ENCODE measurements at regions of chr19 and their contacts with region 1.

Region 1: GRCh38 chr19:39328046-39328705 is 7.5 kb upstream of the LRFN1 start:
- DNase-seq: peak; percentile 82 to 85
- ATAC-seq: peak; percentile 61 to 88 (median 80)
- H3K4me3 ChIP-seq: no peak overlapping the region
- H3K27ac ChIP-seq: no peak overlapping the region
- H3K4me1 ChIP-seq: peaks cover 0 to 16% (median 5%) of the 10 kb centered on the region in 9 donors
- H3K27me3 ChIP-seq: peaks cover 0 to 5% (median 0%) of the 10 kb centered on the region in 7 donors
- CTCF ChIP-seq: peak; percentile 83 to 98 (median 95)

Region 2: DNA sequence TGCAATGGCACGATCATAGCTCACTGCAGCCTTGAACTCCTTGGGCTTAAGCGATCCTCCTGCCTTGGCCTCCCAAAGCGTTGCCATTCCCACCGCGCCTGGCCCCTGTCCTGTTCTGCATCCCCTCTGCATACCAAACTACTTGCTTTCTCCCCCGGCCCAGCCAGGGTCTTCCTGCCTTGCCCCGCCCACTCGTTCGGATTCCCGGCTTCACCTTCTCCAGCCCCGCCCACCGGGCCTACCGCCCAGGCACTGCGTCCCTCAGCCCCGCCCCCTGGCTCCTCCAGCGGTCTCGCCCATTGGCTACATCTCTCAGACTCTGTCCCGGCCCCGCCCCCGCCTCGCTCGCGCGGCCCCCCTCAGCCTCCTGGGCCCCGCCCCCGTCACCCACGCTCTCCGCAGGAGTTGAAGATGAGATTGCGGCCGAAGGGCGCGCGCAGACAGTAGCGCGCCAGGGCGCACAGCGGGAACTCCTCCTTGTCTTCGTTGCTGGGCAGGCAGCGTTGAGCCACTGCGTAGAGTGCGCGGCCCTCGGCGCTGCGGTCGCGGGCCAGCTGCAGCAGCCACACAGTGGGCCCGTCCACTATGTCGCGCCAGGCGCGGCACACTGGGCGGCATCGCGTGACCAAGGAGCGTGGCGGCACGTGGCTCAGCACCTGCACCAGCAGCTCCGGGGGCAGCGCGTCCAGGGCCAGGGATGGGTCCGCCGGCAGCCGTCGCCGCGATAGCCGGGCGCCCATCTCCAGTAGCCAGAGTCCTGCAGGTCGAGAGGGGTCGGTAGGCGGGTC is 378.4 kb before region 1 on chr19:
- intact Hi-C with region 1: loop called in 1 of 10 experiments (anchors 10 kb)
- DNase-seq: peak; percentile 87 to 88
- ATAC-seq: peak; percentile 89 to 97 (median 95)
- H3K4me3 ChIP-seq: peak overlapping the region in 9 of 10 donors; percentile 16 to 51 (median 46)
- H3K27ac ChIP-seq: no peak overlapping the region
- H3K4me1 ChIP-seq: peaks cover 0 to 12% (median 8%) of the 10 kb centered on the region in 9 donors
- H3K27me3 ChIP-seq: peaks cover 0 to 22% (median 4%) of the 10 kb centered on the region in 7 donors
- CTCF ChIP-seq: no peak

Region 3: DNA sequence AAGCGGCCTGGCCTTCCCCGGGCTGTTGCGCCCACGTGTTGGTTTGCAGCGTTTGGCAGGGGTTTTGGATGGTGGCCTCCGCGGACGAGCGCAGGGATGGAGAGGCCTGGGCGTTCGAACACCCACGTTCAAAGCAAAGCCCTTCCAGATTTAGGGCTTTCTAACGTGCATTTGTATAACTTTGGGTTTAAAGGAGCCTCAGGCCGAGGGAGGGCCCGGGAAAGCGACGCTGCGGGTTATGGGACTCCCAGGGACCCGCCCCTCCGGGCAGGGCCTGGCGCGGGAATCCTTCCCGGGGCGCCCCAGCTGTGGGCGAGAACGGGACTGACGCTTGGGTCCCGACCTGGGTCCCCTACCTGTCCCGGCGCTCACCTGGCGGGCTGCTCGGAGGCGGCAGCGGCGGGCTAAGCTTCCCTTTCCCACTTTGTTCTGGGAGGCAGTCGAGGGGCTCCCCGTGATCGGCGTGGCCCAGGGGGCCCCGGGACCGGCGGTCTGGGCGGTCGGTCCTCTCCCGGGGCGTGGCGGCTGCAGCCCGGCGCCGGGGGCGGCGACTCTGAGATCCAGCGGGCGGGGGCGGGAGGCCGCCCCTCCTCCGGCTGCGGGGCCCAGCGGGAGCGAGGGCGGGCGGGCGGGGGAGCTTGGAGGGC is 352.8 kb before region 1 on chr19 and contains the start of gene FBXO17:
- intact Hi-C with region 1: loop called in 2 of 10 experiments (anchors 10 kb)
- DNase-seq: peak; percentile 26 to 61
- ATAC-seq: peak; percentile 64 to 89 (median 82)
- H3K4me3 ChIP-seq: peak within 1 kb of the TSS; percentile 38 to 73 (median 60)
- H3K27ac ChIP-seq: peak within 1 kb of the TSS; percentile 4 to 87 (median 78)
- H3K4me1 ChIP-seq: peaks cover 0 to 17% (median 5%) of the 10 kb centered on the region in 9 donors
- H3K27me3 ChIP-seq: peaks cover 0 to 29% (median 20%) of the 10 kb centered on the region in 7 donors
- CTCF ChIP-seq: no peak
- total RNA-seq, gene FBXO17: 1.00 to 2.8 (median 1.7) TPM

Region 4: GRCh38 chr19:39115546-39116080 is 212.6 kb before region 1 on chr19:
- intact Hi-C with region 1: loop called in 4 of 10 experiments (anchors 2 to 5 kb)
- DNase-seq: no peak
- ATAC-seq: no peak
- H3K4me3 ChIP-seq: no peak overlapping the region
- H3K27ac ChIP-seq: no peak overlapping the region
- H3K4me1 ChIP-seq: no peaks in the 10 kb centered on the region
- H3K27me3 ChIP-seq: peaks cover 0 to 66% (median 42%) of the 10 kb centered on the region in 7 donors
- CTCF ChIP-seq: no peak

Region 5: DNA sequence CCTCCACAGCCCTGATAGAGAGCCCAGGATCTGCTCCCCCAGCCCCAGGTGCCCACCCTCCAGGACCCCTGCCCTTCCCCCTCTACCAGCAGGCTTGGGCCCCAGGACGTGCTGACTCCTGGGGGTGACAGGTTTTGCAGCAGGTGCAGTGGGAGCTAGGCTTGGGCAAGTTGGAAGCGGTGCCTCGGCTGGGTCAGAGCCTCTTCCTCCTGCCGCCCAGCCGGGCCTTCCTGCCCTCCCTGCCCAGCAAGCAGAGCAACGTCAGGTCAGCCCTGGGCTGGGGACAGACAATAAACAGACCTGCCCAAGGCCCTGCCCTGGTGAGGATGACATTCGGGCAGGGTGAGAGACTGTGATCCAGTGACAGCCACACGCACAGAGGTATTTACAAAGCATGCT is 140.6 kb before region 1 on chr19:
- intact Hi-C with region 1: loop called in 3 of 10 experiments (anchors 10 kb)
- DNase-seq: no peak
- ATAC-seq: peak in 6 of 8 donors; percentile 20 to 65 (median 50)
- H3K4me3 ChIP-seq: no peak overlapping the region
- H3K27ac ChIP-seq: no peak overlapping the region
- H3K4me1 ChIP-seq: no peaks in the 10 kb centered on the region
- H3K27me3 ChIP-seq: peaks cover 0 to 47% (median 22%) of the 10 kb centered on the region in 7 donors
- CTCF ChIP-seq: peak in 2 of 9 donors; percentile 14 to 18

Region 6: GRCh38 chr19:39212375-39212742 is 115.8 kb before region 1 on chr19:
- intact Hi-C with region 1: loop called in 1 of 10 experiments (anchors 10 kb)
- DNase-seq: no peak
- ATAC-seq: peak in 1 of 8 donors; percentile 39
- H3K4me3 ChIP-seq: no peak overlapping the region
- H3K27ac ChIP-seq: no peak overlapping the region
- H3K4me1 ChIP-seq: no peaks in the 10 kb centered on the region
- H3K27me3 ChIP-seq: peaks cover 0 to 80% (median 38%) of the 10 kb centered on the region in 7 donors
- CTCF ChIP-seq: peak in 2 of 9 donors; percentile 9 to 42

Region 7: DNA sequence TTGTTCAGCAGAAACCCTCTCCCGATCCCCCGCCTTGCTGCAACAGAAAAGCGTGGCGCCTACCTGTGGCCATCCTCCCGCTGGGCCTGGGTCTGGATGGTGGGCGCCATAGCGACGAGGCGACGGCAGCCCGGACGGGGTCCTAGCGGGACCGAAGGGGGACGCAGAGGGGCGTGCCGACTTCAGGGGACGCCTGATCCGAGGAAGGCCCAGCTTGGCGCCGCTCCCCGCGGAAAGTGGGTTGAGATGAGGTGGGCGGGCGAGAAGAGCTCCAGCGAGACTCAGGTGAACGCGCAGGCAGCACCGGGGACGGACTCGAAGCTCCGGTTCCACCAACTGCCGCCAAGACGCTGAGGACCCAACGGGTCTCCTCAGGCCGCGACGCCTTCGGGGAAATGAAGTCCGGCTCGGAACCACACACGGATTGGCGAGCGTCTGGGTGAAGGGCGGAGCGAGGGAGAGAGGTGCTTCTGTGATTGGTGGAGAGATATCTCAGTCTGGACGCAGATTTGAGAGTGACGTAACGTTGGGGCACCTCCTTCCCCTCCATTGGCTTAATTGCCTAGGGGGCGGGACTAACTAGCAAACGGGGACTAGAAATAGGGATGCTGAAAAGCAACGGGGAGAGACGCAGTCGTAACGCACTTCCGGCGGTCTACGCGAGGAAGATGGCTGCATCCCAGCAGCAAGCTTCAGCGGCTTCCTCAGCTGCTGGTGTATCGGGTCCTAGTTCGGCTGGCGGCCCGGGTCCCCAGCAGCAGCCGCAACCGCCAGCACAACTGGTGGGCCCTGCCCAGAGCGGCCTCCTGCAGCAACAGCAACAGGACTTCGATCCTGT is 62.8 kb after region 1 on chr19 and contains the starts of genes MED29 and PAF1:
- intact Hi-C with region 1: no loop called
- DNase-seq: peak; percentile 94 to 99
- ATAC-seq: peak; percentile 94 to 98 (median 96)
- H3K4me3 ChIP-seq: peak within 1 kb of the TSS; percentile 66 to 99 (median 94)
- H3K27ac ChIP-seq: peak within 1 kb of the TSS; percentile 94 to 100 (median 98)
- H3K4me1 ChIP-seq: peaks cover 12 to 27% (median 24%) of the 10 kb centered on the region in 9 donors
- H3K27me3 ChIP-seq: no peaks in the 10 kb centered on the region
- CTCF ChIP-seq: peak in 2 of 9 donors; percentile 4 to 16
- total RNA-seq, gene MED29: 22.9 to 32.3 (median 27.1) TPM
- total RNA-seq, gene PAF1: 34.3 to 46.4 (median 38.8) TPM